ENCODE measurements at regions of chr2 and their contacts with region 1.

Region 1: DNA sequence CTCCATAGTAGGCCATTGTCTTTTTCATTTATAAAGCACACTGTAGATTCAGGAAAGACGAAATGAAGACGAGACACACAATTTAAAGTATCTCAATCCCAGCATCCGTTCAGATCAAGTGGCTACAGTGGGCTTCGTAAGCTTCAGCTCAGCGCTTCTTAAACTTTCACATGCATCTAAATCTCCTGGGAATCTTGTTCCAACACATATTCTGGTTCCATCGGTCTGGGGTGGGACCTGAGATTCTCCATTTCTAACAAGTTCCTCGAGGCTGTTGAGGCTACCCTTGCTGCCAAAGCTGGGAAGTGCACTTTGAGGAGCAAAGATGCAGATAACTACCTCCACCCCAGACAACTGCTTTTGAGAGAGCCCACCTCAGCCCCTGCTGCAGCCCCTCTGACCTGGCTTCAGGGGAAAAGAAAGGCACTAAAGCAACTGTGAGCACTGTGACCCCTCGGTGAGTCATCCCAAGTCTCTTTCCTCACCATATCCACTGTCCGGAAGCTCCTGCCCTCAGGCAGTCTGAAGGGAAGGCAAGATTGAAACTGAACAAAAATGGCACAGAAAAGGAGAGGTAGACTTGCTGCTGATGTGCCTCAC is 201.1 kb upstream of the FBXO11 start:
- DNase-seq: no peak
- ATAC-seq: no peak
- H3K4me3 ChIP-seq: peak overlapping the region in 3 of 10 donors; percentile 18 to 26 (median 19)
- H3K27ac ChIP-seq: peak overlapping the region in 9 of 10 donors; percentile 21 to 67 (median 59)
- H3K4me1 ChIP-seq: peaks cover 0 to 36% (median 20%) of the 10 kb centered on the region in 9 donors
- H3K27me3 ChIP-seq: no peaks in the 10 kb centered on the region
- CTCF ChIP-seq: no peak

Region 2: GRCh38 chr2:47437287-47437686 is 670.1 kb before region 1 on chr2:
- intact Hi-C with region 1: loop called in 5 of 10 experiments (anchors 2 to 10 kb)
- DNase-seq: peak in 1 of 2 donors; percentile 8
- ATAC-seq: peak in 2 of 8 donors; percentile 58 to 59
- H3K4me3 ChIP-seq: no peak overlapping the region
- H3K27ac ChIP-seq: no peak overlapping the region
- H3K4me1 ChIP-seq: peaks cover 0 to 4% (median 0%) of the 10 kb centered on the region in 9 donors
- H3K27me3 ChIP-seq: no peaks in the 10 kb centered on the region
- CTCF ChIP-seq: peak in 8 of 9 donors; percentile 43 to 78 (median 62)

Region 3: GRCh38 chr2:47767880-47768609 is 339.4 kb before region 1 on chr2:
- intact Hi-C with region 1: loop called in 3 of 10 experiments (anchors 10 kb)
- DNase-seq: peak; percentile 57 to 75
- ATAC-seq: peak; percentile 63 to 86 (median 84)
- H3K4me3 ChIP-seq: no peak overlapping the region
- H3K27ac ChIP-seq: no peak overlapping the region
- H3K4me1 ChIP-seq: peaks cover 0 to 6% (median 0%) of the 10 kb centered on the region in 9 donors
- H3K27me3 ChIP-seq: peaks cover 0 to 4% (median 0%) of the 10 kb centered on the region in 7 donors
- CTCF ChIP-seq: peak; percentile 95 to 100 (median 99)

Region 4: DNA sequence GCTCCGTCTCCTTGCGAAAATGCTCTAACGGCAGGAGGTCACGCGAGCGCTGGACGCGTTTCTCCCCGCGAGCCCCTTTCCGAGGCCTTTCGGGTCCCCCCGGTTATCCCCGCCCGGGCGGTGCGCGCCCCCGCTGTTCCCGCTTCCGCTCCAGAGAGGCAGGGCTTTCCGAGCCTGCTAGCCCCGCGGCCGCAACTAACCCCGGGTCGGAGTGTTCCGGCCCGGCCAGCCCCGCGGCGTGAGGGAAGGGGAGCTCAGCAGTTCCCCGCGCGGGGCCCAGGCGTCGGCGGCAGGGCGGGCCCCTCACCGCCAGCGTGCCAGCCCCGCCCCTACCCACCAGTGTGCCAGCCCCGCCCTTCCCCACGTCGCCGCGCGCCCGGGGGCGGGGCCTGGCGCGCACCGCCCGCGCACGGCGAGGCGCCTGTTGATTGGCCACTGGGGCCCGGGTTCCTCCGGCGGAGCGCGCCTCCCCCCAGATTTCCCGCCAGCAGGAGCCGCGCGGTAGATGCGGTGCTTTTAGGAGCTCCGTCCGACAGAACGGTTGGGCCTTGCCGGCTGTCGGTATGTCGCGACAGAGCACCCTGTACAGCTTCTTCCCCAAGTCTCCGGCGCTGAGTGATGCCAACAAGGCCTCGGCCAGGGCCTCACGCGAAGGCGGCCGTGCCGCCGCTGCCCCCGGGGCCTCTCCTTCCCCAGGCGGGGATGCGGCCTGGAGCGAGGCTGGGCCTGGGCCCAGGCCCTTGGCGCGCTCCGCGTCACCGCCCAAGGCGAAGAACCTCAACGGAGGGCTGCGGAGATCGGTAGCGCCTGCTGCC is 324.5 kb before region 1 on chr2 and contains the start of gene MSH6:
- intact Hi-C with region 1: loop called in 5 of 10 experiments (anchors 5 to 10 kb)
- DNase-seq: peak; percentile 86 to 90
- ATAC-seq: peak; percentile 95 to 98 (median 98)
- H3K4me3 ChIP-seq: peak within 1 kb of the TSS; percentile 74 to 99 (median 88)
- H3K27ac ChIP-seq: peak within 1 kb of the TSS; percentile 64 to 95 (median 90)
- H3K4me1 ChIP-seq: peaks cover 6 to 37% (median 16%) of the 10 kb centered on the region in 9 donors
- H3K27me3 ChIP-seq: no peaks in the 10 kb centered on the region
- CTCF ChIP-seq: no peak
- total RNA-seq, gene MSH6: 19.0 to 25.2 (median 21.5) TPM

Region 5: GRCh38 chr2:47850198-47850597 is 257.2 kb before region 1 on chr2:
- intact Hi-C with region 1: loop called in 3 of 10 experiments (anchors 5 to 10 kb)
- DNase-seq: no peak
- ATAC-seq: no peak
- H3K4me3 ChIP-seq: no peak overlapping the region
- H3K27ac ChIP-seq: no peak overlapping the region
- H3K4me1 ChIP-seq: peaks cover 0 to 60% (median 18%) of the 10 kb centered on the region in 9 donors
- H3K27me3 ChIP-seq: no peaks in the 10 kb centered on the region
- CTCF ChIP-seq: no peak

Region 6: GRCh38 chr2:47867205-47867604 is 240.2 kb before region 1 on chr2:
- intact Hi-C with region 1: loop called in 2 of 10 experiments (anchors 5 to 10 kb)
- DNase-seq: peak in 1 of 2 donors; percentile 75
- ATAC-seq: peak; percentile 89 to 96 (median 94)
- H3K4me3 ChIP-seq: no peak overlapping the region
- H3K27ac ChIP-seq: peak overlapping the region in 8 of 10 donors; percentile 34 to 76 (median 54)
- H3K4me1 ChIP-seq: peaks cover 3 to 81% (median 66%) of the 10 kb centered on the region in 9 donors
- H3K27me3 ChIP-seq: no peaks in the 10 kb centered on the region
- CTCF ChIP-seq: no peak

Region 7: DNA sequence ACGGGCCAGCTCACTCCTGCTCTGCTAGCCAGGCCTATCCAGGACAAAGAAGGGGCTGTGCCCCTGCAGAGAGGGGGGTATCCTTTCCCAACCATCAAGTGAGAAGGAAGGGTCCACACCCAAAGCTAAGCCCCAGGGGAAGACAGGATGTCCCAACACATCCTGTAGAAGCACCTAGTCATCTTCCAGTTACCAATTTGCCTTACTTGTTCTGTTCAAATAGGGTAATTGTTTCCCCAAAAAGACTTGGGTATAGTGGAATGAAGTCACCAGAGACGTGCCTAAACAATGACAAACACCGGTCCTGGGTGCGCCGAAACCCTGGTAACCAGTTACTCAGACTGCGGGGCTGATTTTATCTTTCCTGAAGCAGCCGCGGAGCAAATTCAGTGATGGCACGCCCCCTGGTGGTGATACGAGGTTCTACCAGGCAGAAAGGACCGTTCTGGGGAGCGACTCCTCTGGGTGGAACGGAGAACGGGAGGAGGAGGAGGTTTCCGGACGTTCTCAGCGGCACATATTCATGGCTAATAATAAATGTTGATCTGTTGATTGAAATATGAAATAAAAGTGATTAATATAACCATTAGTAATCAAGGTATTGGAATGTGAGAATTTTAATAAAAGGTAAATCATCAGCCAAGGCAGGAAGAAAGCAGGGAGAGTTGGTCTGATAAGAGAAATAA is 313.2 kb after region 1 on chr2:
- intact Hi-C with region 1: loop called in 1 of 10 experiments (anchors 1 kb)
- DNase-seq: peak; percentile 88 to 91
- ATAC-seq: peak; percentile 81 to 98 (median 92)
- H3K4me3 ChIP-seq: peak overlapping the region in 6 of 10 donors; percentile 8 to 32 (median 24)
- H3K27ac ChIP-seq: peak overlapping the region in 9 of 10 donors; percentile 16 to 76 (median 44)
- H3K4me1 ChIP-seq: peaks cover 6 to 28% (median 20%) of the 10 kb centered on the region in 9 donors
- H3K27me3 ChIP-seq: no peaks in the 10 kb centered on the region
- CTCF ChIP-seq: peak; percentile 94 to 99 (median 99)

Measured in heart right ventricle (tissue), 16 donors.